Ascending aorta (tissue), 2 donors: ENCODE measurements at regions of chr12 and their contacts with region 1.

Region 1: DNA sequence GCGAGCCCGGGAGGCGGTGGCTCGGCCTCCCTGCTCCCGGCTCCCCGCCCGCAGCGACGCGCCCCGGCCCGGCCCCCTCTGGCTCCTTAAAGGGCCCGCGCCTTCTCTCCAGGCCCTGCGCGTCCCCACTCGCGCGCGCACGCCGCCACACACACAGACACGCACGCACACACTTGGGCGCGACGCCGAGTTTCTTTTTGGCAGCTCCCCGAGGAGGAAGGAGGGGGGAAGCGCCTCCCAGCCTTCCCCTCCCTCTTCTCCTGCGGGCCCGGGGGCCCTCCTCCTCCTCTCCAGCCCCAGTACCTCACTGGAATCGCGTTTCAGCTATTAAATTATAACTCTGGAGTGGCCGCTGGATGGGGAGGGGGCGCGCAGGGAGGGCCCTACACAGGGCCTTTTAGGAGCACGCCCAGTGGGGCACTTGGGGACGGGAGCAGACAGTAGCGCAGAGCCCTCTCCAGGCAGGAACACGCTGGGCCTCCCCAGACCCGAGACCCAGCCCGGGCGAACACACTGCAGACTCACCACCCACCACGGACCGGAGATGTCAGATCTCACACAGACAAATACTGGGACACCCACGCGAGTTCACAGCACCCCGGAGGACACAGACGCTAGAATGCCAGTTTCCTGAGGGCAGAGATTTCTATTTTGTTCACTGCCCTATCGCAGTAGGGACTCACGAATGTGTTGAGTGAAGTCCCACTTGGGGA is 405 bp upstream of the NCOR2 start:
- DNase-seq: peak; percentile 83 to 96
- H3K4me3 ChIP-seq: peak overlapping the region; percentile 39 to 75
- H3K27ac ChIP-seq: peak overlapping the region; percentile 88 to 91
- H3K4me1 ChIP-seq: peaks cover 16 to 44% of the 10 kb centered on the region in 2 donors
- H3K27me3 ChIP-seq: no peaks in the 10 kb centered on the region
- CTCF ChIP-seq: no peak

Region 2: GRCh38 chr12:123972457-123973401 is 595.1 kb before region 1 on chr12 and contains the starts of genes CCDC92 and ZNF664:
- intact Hi-C with region 1: loop called (anchors 5 kb)
- DNase-seq: peak; percentile 73 to 94
- H3K4me3 ChIP-seq: peak within 1 kb of the TSS; percentile 72 to 91
- H3K27ac ChIP-seq: peak within 1 kb of the TSS; percentile 97
- H3K4me1 ChIP-seq: peaks cover 4 to 25% of the 10 kb centered on the region in 2 donors
- H3K27me3 ChIP-seq: no peaks in the 10 kb centered on the region
- CTCF ChIP-seq: peak in 2 of 3 experiments; percentile 15 to 21
- total RNA-seq, gene CCDC92: 31.0 TPM
- total RNA-seq, gene ZNF664: 27.7 TPM

Region 3: DNA sequence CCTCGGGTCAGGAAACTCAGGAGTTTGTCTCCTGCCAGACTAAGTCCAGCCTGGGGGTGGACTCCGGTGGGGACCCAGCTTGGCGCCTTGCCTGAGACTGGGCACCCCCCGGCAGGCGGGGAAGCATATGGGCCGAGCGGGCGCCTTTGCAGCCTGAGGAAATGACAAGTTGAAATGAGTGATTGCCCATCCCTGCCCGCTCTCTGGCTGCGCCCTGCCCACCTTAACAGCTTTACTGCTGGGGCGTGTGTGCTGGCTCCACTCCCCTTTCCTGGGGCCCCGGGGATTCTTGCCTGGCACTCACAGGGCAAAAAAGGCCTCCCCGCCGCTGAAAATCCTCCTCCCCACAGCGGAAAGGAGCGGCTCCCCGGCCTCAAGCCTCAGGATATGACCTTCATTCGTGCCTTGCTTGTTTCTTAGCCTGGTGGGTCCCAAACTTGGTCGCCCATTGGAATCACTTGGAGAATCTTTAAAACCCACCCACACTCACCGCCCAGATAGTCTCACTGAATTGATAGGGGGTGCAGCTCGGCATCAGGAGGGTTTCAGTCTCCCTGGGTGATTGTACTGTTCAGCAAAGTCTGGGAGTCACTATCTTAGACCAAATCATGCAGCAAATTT is 271.4 kb before region 1 on chr12:
- intact Hi-C with region 1: no loop called
- DNase-seq: no peak
- H3K4me3 ChIP-seq: peak overlapping the region in 1 of 2 donors; percentile 67
- H3K27ac ChIP-seq: no peak overlapping the region
- H3K4me1 ChIP-seq: peaks cover 7 to 21% of the 10 kb centered on the region in 2 donors
- H3K27me3 ChIP-seq: no peaks in the 10 kb centered on the region
- CTCF ChIP-seq: no peak

Region 4: DNA sequence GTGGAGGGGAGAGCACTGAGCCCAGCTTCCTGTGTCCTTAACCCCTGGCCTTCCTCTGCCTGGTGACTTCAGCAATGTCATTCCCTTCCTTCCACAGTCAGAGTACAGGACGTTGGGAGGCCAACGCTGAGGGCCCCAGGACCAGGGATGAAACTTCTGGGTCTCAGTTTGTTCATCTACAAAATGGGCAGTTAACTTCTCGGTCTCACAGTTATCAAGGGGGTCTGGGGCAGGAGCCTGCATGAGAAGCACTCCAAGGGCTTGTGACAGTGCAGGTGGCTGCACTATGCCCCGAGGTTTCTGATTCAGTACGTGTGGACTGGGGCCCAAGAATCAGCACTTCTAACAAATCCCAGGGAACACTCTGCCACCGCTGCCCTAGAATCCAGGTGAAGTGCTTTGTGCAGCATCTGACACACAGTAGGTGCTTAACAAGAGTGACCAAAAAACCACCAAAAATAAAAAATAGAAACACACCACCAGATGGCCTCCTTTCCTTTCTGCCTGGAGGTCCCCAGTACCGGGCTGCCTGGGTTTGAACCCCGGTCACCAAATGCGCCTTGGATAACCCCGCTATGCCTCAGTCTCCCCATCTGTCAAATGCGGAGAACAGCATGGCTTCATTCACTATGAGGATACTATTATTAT is 192.6 kb before region 1 on chr12:
- intact Hi-C with region 1: no loop called
- DNase-seq: no peak
- H3K4me3 ChIP-seq: no peak overlapping the region
- H3K27ac ChIP-seq: no peak overlapping the region
- H3K4me1 ChIP-seq: peaks cover 5 to 20% of the 10 kb centered on the region in 2 donors
- H3K27me3 ChIP-seq: no peaks in the 10 kb centered on the region
- CTCF ChIP-seq: no peak

Region 5: DNA sequence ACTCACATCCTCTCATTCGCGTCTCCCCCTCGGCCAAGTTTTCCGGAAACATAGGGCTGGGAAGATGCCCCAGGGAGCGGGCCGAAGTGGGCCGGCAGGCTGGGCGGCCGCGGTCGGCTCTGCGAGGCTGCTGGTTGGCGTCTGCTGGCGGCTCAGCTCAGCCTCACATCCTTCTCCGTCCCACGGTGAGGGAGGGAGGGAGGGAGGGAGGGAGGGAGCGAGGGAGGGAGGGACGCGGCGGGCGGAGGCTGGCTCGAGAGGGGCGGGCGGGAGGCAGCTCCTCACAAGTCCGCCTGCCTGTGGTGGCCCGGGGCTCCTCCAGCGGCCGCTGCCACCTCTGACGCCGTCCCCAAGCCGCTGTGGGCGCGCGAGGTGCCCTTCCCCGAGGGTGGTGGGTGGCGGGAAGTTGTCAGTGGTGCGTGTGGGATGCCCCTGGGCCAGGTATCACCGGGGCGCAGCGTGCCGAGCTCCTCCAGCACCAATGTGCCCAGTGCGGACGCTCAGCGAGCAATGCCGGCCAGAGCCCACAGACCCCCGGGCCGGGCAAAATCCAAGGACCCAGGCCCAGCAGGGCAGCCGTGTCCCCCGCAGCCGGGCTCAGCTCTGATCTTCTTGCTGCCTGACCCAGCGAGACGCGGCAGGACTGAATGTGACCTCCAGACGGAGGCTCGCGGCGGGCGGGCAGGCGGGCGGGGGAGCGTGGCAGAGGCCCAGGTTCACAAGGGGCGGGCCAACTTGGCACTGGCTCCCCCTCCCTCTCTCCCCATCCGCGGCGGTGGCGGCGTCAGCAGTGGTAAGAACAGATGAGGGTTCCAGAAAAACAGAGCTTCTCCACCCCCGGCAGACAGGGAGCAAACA is 178.9 kb before region 1 on chr12:
- intact Hi-C with region 1: loop called (anchors 5 kb)
- DNase-seq: peak; percentile 70 to 95
- H3K4me3 ChIP-seq: peak overlapping the region; percentile 59 to 67
- H3K27ac ChIP-seq: peak overlapping the region; percentile 90 to 94
- H3K4me1 ChIP-seq: peaks cover 36 to 66% of the 10 kb centered on the region in 2 donors
- H3K27me3 ChIP-seq: no peaks in the 10 kb centered on the region
- CTCF ChIP-seq: peak in 2 of 3 experiments; percentile 7 to 9

Region 6: DNA sequence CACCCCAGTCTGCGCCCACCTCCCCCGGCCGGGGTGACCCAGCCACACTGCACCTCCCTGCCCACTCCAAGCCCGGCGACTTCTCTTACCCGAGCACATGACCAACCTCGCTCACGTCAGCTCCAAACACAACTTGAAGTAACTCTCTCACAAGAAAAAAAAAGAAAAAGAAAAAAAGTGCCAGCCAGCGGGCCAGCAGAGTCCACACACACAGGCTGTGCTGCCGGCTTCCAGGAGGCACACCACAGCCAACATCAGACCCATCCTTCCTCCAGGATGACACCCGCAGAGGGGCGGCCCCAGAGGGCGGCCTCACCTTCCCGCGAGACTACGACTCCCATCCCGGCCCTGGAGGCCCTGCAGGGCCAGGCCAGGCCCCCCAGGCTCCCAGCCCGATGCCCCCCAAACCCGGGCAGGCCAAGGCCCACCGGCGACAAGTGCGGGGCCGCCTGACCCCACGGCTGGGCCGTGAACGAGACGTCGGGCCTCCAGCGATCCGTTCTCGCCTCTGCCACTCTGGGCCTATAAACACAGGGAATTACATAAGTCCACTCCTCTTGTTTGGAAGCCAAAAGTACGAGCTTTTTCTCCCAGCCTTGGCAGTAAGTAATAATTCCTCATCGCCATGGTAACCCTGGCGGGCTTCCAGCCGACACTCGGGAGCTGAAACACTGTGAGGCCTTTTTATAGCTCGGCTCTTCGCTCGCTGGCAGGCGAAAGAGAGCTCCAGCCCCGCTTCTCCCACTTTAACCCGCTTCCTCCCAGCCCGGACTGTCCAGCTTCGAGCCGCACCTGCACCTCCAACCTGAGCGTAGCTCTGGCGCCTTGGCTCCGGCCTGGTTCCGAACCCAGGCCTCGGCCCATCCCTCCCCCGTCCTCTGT is 49.5 kb before region 1 on chr12:
- intact Hi-C with region 1: loop called (anchors 1 kb)
- DNase-seq: peak; percentile 94 to 100
- H3K4me3 ChIP-seq: peak overlapping the region; percentile 54 to 67
- H3K27ac ChIP-seq: peak overlapping the region; percentile 91 to 97
- H3K4me1 ChIP-seq: peaks cover 39 to 71% of the 10 kb centered on the region in 2 donors
- H3K27me3 ChIP-seq: no peaks in the 10 kb centered on the region
- CTCF ChIP-seq: no peak

Region 7: DNA sequence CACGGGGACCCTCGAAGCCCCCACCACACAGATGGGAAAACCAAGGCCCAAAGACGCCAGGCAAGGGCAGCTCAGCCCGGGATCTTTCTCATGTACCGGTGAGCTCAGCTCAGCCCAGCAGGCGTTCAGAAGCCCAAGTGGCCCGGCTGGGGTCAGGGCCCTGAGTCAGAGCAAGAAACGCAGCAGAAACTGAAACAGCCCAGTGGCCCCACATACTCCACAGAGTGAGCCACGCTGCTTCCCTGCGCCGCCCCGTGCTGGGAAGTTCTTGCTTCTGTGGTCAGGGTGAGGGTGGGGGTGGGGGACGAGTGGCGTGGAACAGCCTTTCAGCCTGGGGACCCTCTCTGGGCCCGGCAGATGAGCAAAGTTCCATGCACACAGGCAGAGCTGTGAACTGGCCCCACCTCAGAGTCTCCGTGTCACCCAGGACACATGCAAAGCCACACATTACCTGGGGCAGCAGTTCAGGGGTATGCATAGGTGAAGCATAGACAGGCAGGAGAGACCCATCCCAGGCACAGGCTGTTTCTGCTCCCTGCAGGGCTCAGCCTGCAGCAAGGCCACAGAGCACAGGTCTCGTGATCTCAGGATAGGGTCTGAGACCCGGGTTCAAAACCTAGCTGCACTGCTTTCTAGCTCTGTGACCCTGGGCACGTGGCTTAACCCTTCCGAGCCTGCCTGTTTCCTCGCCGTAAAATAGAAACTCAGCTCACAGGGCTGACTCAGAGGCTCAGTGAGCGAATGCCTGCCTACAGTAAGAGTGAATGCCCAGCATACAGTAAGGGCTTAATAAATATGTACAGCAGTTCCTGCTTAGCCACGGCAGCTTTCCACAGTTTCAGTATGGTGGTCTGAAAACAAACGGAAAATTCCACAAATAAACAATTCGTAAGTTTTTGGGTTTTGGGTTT is 22.1 kb before region 1 on chr12:
- intact Hi-C with region 1: no loop called
- DNase-seq: no peak
- H3K4me3 ChIP-seq: no peak overlapping the region
- H3K27ac ChIP-seq: no peak overlapping the region
- H3K4me1 ChIP-seq: peaks cover 15 to 61% of the 10 kb centered on the region in 2 donors
- H3K27me3 ChIP-seq: no peaks in the 10 kb centered on the region
- CTCF ChIP-seq: no peak

Region 8: DNA sequence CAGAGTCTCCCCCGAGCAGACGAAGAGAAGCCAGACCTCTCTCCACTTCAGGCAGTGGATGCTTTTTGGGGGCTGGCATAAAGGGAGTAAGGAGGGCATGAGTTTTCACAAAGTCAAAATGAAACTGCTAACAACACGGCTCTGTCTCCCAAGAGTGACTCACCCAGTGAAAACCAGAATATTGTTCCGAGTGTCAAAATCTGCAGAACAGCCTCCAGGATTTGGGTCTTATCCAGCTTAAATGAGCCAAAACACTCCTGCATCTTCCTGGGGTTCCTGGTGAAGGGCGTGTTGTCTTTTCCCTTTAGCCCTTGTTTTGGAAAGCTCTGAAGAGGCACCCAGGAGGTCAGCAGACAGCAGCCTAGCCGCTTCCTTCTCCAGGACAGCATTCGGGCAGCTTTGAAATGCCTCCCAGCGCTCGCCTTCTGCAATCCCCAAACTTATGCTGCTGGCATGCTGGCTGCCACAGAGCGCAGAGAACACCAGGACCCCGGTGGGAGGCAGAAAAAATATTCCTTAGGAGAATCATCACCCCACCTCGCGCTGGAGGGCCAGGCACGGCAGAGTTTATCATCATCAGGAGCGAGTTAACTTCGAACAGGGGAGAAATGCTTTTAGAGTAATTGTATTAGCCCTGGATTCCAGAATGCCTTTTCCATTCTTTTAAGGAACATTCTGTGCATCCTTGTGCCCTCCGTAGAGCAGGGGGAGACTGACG is 117.3 kb after region 1 on chr12:
- intact Hi-C with region 1: loop called (anchors 5 kb)
- DNase-seq: peak in 1 of 2 donors; percentile 70
- H3K4me3 ChIP-seq: peak overlapping the region; percentile 36 to 53
- H3K27ac ChIP-seq: peak overlapping the region; percentile 80 to 85
- H3K4me1 ChIP-seq: peaks cover 19 to 44% of the 10 kb centered on the region in 2 donors
- H3K27me3 ChIP-seq: no peaks in the 10 kb centered on the region
- CTCF ChIP-seq: no peak

Region 9: DNA sequence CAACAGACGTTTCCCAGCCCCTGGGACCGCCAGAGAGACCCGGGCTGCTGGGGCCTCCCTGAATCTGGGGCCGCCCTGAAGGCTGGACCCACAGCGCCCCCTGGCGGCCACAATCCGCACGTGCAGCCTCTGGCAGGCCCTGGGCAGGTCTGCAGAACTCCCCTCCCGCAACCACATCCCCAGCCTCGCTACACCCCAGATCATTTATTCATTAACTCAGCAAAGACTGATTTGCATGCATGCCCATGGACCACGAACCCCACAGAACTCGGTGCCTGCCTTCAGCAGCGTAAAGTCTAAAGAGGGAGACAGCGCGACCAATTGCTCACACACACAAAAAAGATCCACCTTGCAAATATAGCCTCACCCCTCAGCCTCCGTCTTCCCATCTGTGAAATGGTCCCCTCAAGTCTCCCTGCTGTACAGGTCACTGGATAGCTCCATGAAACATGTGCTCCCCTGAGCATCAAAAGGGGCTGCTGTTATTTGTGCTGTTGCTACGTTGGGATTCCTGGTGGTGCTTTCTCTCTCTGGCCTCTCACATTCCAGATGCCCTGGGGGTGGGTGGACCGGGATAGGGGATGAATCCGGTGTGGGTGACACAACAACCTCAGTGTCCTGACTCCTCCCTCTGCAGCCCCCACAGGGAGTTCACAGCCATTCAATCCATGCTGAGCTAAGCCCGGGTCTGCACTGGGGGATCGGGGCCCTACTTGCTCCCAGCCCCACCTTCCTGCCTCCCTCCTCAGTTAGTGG is 199.4 kb after region 1 on chr12:
- intact Hi-C with region 1: loop called (anchors 1 kb)
- DNase-seq: peak in 1 of 2 donors; percentile 89
- H3K4me3 ChIP-seq: no peak overlapping the region
- H3K27ac ChIP-seq: peak overlapping the region in 1 of 2 donors; percentile 79
- H3K4me1 ChIP-seq: peaks cover 24 to 37% of the 10 kb centered on the region in 2 donors
- H3K27me3 ChIP-seq: no peaks in the 10 kb centered on the region
- CTCF ChIP-seq: peak; percentile 97 to 100 (median 99)